Ascending aorta (tissue), 2 donors: ENCODE measurements at regions of chr4 and their contacts with region 1.

Region 1: DNA sequence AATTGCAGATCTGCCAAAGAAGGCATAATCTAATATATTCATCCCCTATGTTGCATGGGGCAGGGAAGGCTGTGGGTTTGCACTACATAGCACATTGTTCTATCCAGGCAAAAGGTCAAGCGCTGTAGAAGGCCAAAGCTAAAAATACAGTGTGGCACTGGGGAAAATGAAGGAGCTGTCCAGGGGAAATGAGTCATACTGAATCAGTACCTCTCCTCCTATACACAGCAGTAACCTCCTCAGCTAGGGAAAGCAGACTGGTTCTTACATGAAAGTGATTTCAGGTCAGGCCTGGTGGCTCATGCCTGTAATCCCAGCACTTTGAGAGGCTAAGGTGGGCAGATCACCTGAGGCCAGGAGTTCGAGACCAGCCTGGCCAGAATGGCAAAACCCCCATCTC is 31.0 kb upstream of the SLC25A4 start:
- DNase-seq: peak in 1 of 2 donors; percentile 84
- H3K4me3 ChIP-seq: no peak overlapping the region
- H3K27ac ChIP-seq: peak overlapping the region; percentile 32 to 55
- H3K4me1 ChIP-seq: peaks cover 0 to 13% of the 10 kb centered on the region in 2 donors
- H3K27me3 ChIP-seq: no peaks in the 10 kb centered on the region
- CTCF ChIP-seq: no peak

Region 2: DNA sequence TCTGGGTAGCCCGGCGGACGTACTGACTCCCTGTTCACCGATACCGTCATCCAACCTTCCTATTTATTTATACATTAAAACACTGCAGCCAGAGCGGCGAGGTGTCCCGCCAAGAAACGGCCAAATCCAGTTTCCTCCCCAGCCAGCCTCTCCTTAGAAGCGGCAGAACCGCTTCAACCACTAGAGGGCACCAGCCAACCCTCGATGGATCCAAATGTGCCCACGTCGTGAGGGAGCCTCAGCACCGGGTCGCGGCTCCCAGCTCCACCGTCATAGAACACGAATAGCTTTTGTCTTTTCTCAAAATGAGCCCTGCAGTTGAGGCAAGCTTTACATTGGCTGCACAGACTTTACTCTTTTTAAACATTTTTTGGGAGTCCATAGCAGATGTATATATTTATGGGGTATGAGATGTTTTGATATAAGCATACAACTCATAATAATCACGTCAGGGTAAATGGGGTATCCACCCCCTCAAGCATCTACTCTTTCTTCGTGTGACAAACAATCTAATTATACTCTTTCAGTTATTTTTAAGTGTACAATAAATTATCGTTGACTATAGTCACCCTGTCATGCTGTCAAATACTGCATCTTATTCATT is 106.8 kb before region 1 on chr4:
- intact Hi-C with region 1: no loop called
- DNase-seq: peak; percentile 38 to 90
- H3K4me3 ChIP-seq: peak overlapping the region; percentile 16 to 48
- H3K27ac ChIP-seq: no peak overlapping the region
- H3K4me1 ChIP-seq: no peaks in the 10 kb centered on the region
- H3K27me3 ChIP-seq: no peaks in the 10 kb centered on the region
- CTCF ChIP-seq: peak; percentile 62 to 95 (median 95)

Region 3: DNA sequence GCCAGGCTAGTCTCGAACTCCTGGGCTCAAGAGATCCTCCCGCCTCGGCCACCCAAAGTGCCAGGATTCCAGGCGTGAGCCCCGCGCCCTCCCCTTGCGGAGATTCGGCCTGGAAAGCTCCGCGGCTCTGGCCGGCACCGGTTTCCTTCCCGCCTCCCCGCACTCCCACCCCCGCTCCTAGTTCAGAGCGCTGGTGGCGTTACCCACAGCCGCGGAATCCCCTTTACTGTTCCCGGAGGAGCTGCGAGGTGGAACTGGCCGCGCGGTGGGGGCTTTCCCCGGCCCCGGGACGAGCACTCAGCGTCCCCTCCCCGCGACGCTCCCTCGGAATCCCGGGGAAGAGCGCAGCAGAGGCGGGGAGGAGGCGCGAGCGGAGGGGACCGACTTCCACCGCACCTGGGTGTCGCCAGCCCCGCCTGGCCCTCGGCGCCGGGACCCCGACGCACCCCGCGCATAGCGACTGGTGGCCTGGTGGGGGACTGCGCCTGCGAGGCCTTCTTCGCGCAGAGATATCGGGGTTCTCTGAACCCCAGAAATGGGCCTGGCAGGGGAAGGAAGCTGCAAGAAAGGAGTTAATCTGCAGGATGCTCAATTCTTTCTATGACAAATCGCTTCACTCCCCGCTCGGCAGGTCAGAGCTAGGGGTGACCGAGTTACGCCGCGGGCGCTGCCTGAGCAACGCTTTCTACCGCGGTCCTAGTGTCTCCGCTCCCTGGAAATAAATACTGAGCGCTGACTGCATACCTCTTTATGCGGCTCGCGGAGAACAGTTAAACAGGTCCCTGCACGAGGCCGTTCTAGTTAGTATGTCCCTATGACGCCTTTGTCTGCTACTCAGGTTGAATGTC is 16.4 kb after region 1 on chr4:
- intact Hi-C with region 1: loop called (anchors 2 kb)
- DNase-seq: peak in 1 of 2 donors; percentile 70
- H3K4me3 ChIP-seq: peak overlapping the region; percentile 61 to 72
- H3K27ac ChIP-seq: peak overlapping the region; percentile 81 to 82
- H3K4me1 ChIP-seq: peaks cover 0 to 8% of the 10 kb centered on the region in 2 donors
- H3K27me3 ChIP-seq: no peaks in the 10 kb centered on the region
- CTCF ChIP-seq: peak in 1 of 3 experiments; percentile 6

Region 4: GRCh38 chr4:185265942-185266341 is 153.8 kb after region 1 on chr4:
- intact Hi-C with region 1: no loop called
- DNase-seq: no peak
- H3K4me3 ChIP-seq: no peak overlapping the region
- H3K27ac ChIP-seq: no peak overlapping the region
- H3K4me1 ChIP-seq: peaks cover 2 to 3% of the 10 kb centered on the region in 2 donors
- H3K27me3 ChIP-seq: no peaks in the 10 kb centered on the region
- CTCF ChIP-seq: no peak

Region 5: DNA sequence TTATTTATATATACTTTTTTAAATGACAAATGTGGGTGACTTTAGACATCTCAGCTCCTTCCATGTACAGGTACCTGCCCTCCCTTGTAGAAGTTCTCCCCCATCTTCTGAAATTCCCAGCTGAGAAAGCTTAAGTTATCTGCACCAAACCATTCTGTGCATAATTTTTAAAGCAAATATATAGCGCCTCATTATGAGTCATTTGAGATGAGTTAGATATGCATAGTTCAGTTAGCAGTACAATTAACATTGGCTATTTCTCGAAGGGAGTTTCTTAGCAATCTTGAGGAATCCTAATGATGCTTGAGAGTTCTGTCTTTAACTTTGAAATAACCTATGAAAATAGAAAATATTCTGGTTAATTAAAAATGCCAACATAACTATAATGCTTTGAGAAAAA is 333.1 kb after region 1 on chr4:
- intact Hi-C with region 1: no loop called
- DNase-seq: no peak
- H3K4me3 ChIP-seq: no peak overlapping the region
- H3K27ac ChIP-seq: no peak overlapping the region
- H3K4me1 ChIP-seq: no peaks in the 10 kb centered on the region
- H3K27me3 ChIP-seq: no peaks in the 10 kb centered on the region
- CTCF ChIP-seq: no peak